PC-9 (cell line): ENCODE measurements at regions of chr15 and their contacts with region 1.

Region 1: DNA sequence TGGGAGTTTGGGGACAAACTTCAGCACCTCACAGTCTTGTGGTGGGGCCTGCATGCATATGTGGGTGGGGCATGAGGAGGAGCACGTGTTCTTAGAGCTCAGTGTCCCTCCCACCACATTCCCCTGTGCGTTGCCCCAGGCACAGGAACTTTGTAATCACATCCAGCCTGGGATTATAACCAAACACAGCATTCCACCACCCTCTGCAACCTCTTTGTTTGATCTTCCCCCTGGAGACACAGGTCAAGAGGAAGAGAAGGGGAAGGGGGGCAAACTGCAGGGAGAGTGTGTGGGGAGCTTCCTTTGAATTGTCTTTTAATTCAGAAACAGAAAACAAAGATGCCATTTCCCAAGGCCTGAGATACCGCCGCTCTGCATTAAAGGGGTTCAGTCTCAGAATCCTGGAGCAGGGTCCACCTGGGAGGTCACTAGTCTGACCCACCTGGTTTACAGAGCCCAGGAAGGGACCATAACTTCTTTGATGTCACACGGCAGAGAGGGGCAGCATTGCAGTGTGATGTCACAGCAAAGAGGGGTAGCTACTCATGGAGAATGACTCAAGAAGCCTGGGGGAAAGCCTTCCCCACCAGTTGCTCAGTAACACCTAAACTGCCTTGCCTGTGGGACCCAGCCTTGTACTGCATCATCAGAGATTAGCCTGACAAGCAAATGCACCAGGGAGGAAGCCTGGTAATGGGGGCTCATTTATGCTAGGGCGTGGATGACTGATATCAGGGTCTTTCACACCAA is 106.3 kb upstream of the RNU6-1 start:
- DNase-seq: peak; percentile 72 to 77
- H3K4me3 ChIP-seq: no peak overlapping the region
- H3K27ac ChIP-seq: peak overlapping the region; percentile 54
- H3K4me1 ChIP-seq: peaks cover 28% of the 10 kb centered on the region
- H3K27me3 ChIP-seq: no peaks in the 10 kb centered on the region
- CTCF ChIP-seq: no peak

Region 2: GRCh38 chr15:68143785-68144184 is 197.7 kb after region 1 on chr15:
- CTCF ChIA-PET with region 1: no interaction called
- POLR2A ChIA-PET with region 1: interaction called, 18 read pairs
- intact Hi-C with region 1: no loop called
- DNase-seq: no peak
- H3K4me3 ChIP-seq: no peak overlapping the region
- H3K27ac ChIP-seq: no peak overlapping the region
- H3K4me1 ChIP-seq: peaks cover 8% of the 10 kb centered on the region
- H3K27me3 ChIP-seq: no peaks in the 10 kb centered on the region
- CTCF ChIP-seq: no peak

Region 3: GRCh38 chr15:68271854-68272471 is 325.8 kb after region 1 on chr15:
- CTCF ChIA-PET with region 1: no interaction called
- POLR2A ChIA-PET with region 1: interaction called, 15 read pairs
- intact Hi-C with region 1: no loop called
- DNase-seq: peak; percentile 89 to 97
- H3K4me3 ChIP-seq: peak overlapping the region; percentile 43; the same call in 1 of the 2 replicates
- H3K27ac ChIP-seq: peak overlapping the region; percentile 86
- H3K4me1 ChIP-seq: peaks cover 62% of the 10 kb centered on the region
- H3K27me3 ChIP-seq: no peaks in the 10 kb centered on the region
- CTCF ChIP-seq: no peak